Panc1 (cell line): ENCODE measurements at regions of chr7 and their contacts with region 1.

Region 1: DNA sequence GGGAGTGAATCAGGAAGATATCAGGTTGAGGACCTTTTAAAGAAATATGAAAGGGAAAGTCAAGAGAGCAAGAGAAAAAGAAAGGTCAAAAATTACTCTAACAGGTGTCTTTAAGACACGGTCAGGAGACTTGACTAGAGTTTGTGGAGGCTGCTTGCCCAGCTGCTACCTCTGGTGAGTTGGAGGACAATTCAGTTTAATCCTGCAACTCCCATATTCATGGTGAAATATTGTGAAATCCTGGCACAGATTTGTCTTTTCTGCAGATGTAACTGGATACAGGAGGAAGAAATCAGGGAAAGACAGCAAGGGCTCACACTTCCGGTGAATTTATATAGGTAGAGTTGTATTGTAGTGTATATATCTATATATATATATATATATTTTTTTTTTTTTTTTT is 93.5 kb downstream of the AKAP9 start:
- DNase-seq: no peak
- ATAC-seq: no peak
- H3K4me3 ChIP-seq: no peak overlapping the region
- H3K27ac ChIP-seq: no peak overlapping the region
- H3K4me1 ChIP-seq: no peaks in the 10 kb centered on the region
- H3K27me3 ChIP-seq: no peaks in the 10 kb centered on the region
- CTCF ChIP-seq: no peak

Region 2: DNA sequence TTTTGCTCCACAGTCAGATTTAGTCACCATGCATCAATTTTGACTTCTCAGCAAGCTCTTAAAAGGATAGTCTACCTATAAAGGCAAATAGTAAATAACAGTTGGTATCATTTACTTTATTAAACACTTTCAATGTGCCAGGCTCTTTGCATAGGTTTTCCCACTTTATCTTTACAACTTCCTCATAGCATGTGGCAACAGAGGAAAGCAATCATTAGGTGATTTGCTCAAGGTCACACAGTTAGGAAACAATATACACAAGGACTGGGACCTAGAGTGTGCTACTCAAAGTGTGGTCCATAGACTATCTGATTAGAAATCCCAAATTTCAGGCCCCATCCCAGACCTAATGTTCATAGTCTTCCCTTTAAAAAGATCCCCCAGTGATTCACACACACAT is 365.9 kb before region 1 on chr7:
- CTCF ChIA-PET with region 1: no interaction called
- POLR2A ChIA-PET with region 1: no interaction called
- in situ Hi-C with region 1: no loop called
- intact Hi-C with region 1: no loop called
- DNase-seq: no peak
- ATAC-seq: no peak
- H3K4me3 ChIP-seq: no peak overlapping the region
- H3K27ac ChIP-seq: no peak overlapping the region
- H3K4me1 ChIP-seq: no peaks in the 10 kb centered on the region
- H3K27me3 ChIP-seq: no peaks in the 10 kb centered on the region
- CTCF ChIP-seq: no peak

Region 3: GRCh38 chr7:91941450-91941849 is 92.7 kb before region 1 on chr7:
- CTCF ChIA-PET with region 1: no interaction called
- POLR2A ChIA-PET with region 1: interaction called, 11 read pairs
- in situ Hi-C with region 1: no loop called
- intact Hi-C with region 1: no loop called
- DNase-seq: no peak
- ATAC-seq: 0 out of 2 replicates have a peak, but pooled peaks have one; percentile 19
- H3K4me3 ChIP-seq: peak overlapping the region; percentile 86 to 88
- H3K27ac ChIP-seq: peak overlapping the region; percentile 81
- H3K4me1 ChIP-seq: peaks cover 11% of the 10 kb centered on the region
- H3K27me3 ChIP-seq: no peaks in the 10 kb centered on the region
- CTCF ChIP-seq: no peak